Left ventricle myocardium superior (tissue), 1 donor: ENCODE measurements at regions of chr17 and their contacts with region 1.

Region 1: GRCh38 chr17:29369831-29370735 is 20.1 kb upstream of the TAOK1 start:
- DNase-seq: peak; percentile 51
- ATAC-seq: peak; percentile 94

Region 2: DNA sequence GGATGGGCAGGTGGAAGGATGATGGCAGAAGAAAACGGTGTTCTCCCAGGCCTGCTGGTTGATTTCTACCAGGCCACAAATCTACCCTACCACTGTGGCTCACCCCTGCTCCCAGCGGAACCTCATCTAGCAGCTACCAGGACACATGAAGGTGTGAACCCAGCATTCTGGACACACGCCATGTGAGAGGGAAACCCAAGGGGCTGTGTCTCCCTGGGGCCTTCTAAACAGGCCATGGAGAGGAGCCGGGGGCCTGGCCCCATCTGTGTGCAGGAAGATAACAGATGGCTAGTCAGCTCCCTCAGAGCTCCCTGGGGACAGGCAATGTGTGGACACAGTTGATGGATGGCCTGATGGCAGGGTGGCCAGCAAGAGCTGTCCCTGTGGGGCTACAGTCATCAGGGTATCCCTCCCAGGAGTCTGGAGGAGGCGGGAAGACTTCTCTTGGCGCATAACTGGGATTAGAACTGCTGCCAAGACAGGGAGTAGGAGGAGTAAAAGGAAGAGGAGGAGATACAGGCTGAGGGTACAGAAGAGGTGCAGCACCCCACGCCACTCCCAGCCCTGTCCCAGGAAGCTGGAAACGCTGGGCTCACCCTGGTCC is 207.2 kb before region 1 on chr17:
- intact Hi-C with region 1: no loop called
- DNase-seq: no peak
- ATAC-seq: no peak

Region 3: GRCh38 chr17:29303386-29303785 is 66.7 kb before region 1 on chr17:
- intact Hi-C with region 1: no loop called
- DNase-seq: no peak
- ATAC-seq: no peak

Region 4: DNA sequence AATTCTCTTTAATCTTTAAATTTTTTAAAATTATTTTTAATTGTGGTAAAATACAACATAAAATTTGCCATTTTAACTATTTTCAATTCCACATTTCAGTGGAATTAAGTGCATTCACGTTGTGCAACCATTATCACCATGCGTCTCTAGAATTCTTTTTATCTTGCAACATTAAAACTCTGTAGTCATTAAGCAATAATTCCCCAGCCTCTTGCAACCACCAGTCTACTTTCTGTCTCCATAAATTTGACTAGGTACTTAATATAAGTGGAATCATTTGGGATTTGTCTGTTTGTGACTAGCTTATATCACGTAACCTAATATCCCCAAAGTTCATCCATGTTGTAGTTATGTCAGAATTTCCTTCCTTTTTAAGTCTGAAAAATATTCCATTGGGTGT is 99.2 kb after region 1 on chr17:
- intact Hi-C with region 1: no loop called
- DNase-seq: no peak
- ATAC-seq: no peak

Region 5: GRCh38 chr17:29533976-29534375 is 163.9 kb after region 1 on chr17:
- intact Hi-C with region 1: loop called (anchors 2 kb)
- DNase-seq: no peak
- ATAC-seq: no peak